ENCODE measurements at regions of chr2 and their contacts with region 1.

Region 1: GRCh38 chr2:239401067-239401880 is 454 bp upstream of the HDAC4 start:
- DNase-seq: peak; percentile 100
- ATAC-seq: peak; percentile 86
- H3K4me3 ChIP-seq: peak overlapping the region; percentile 12 to 91 (median 91)
- H3K4me3 Mint-ChIP-seq: peak overlapping the region; percentile 94
- H3K27ac ChIP-seq: peak overlapping the region; percentile 99 to 100
- H3K27ac Mint-ChIP-seq: peak overlapping the region; percentile 99
- H3K4me1 ChIP-seq: peaks cover 11 to 20% of the 10 kb centered on the region in 2 donors
- H3K4me1 Mint-ChIP-seq: peaks cover 33% of the 10 kb centered on the region
- H3K27me3 ChIP-seq: peaks cover 0 to 3% (median 0%) of the 10 kb centered on the region in 4 experiments
- H3K27me3 Mint-ChIP-seq: no peaks in the 10 kb centered on the region
- CTCF ChIP-seq: no peak

Region 2: GRCh38 chr2:239035361-239036078 is 365.8 kb before region 1 on chr2:
- CTCF ChIA-PET with region 1: no interaction called
- POLR2A ChIA-PET with region 1: no interaction called
- intact Hi-C with region 1: loop called (anchors 5 kb)
- DNase-seq: peak; percentile 62
- ATAC-seq: peak; percentile 89
- H3K4me3 ChIP-seq: no peak overlapping the region
- H3K4me3 Mint-ChIP-seq: no peak overlapping the region
- H3K27ac ChIP-seq: no peak overlapping the region
- H3K27ac Mint-ChIP-seq: no peak overlapping the region
- H3K4me1 ChIP-seq: no peaks in the 10 kb centered on the region
- H3K4me1 Mint-ChIP-seq: no peaks in the 10 kb centered on the region
- H3K27me3 ChIP-seq: peaks cover 0 to 2% (median 0%) of the 10 kb centered on the region in 4 experiments
- H3K27me3 Mint-ChIP-seq: peaks cover 16% of the 10 kb centered on the region
- CTCF ChIP-seq: peak; percentile 80

Region 3: GRCh38 chr2:239252801-239253200 is 148.5 kb before region 1 on chr2:
- CTCF ChIA-PET with region 1: interaction called, 3 read pairs
- POLR2A ChIA-PET with region 1: no interaction called
- intact Hi-C with region 1: loop called (anchors 5 kb)
- DNase-seq: no peak
- ATAC-seq: peak; percentile 19
- H3K4me3 ChIP-seq: peak overlapping the region in 4 of 5 experiments; percentile 15 to 36 (median 34)
- H3K4me3 Mint-ChIP-seq: peak overlapping the region; percentile 84
- H3K27ac ChIP-seq: no peak overlapping the region
- H3K27ac Mint-ChIP-seq: no peak overlapping the region
- H3K4me1 ChIP-seq: peaks cover 32 to 41% of the 10 kb centered on the region in 2 donors
- H3K4me1 Mint-ChIP-seq: peaks cover 49% of the 10 kb centered on the region
- H3K27me3 ChIP-seq: peaks cover 0 to 56% (median 16%) of the 10 kb centered on the region in 4 experiments
- H3K27me3 Mint-ChIP-seq: peaks cover 25% of the 10 kb centered on the region
- CTCF ChIP-seq: no peak

Region 4: GRCh38 chr2:239267288-239267951 is 133.9 kb before region 1 on chr2:
- CTCF ChIA-PET with region 1: interaction called, 9 read pairs
- POLR2A ChIA-PET with region 1: interaction called, 9 read pairs
- intact Hi-C with region 1: loop called (anchors 1 kb)
- DNase-seq: peak; percentile 91
- ATAC-seq: peak; percentile 95
- H3K4me3 ChIP-seq: peak overlapping the region; percentile 4 to 79 (median 26)
- H3K4me3 Mint-ChIP-seq: peak overlapping the region; percentile 87
- H3K27ac ChIP-seq: no peak overlapping the region
- H3K27ac Mint-ChIP-seq: peak overlapping the region; percentile 79
- H3K4me1 ChIP-seq: peaks cover 55 to 62% of the 10 kb centered on the region in 2 donors
- H3K4me1 Mint-ChIP-seq: peaks cover 56% of the 10 kb centered on the region
- H3K27me3 ChIP-seq: peaks cover 0 to 92% (median 36%) of the 10 kb centered on the region in 4 experiments
- H3K27me3 Mint-ChIP-seq: peaks cover 60% of the 10 kb centered on the region
- CTCF ChIP-seq: peak; percentile 73

Region 5: GRCh38 chr2:239369631-239370161 is 31.6 kb before region 1 on chr2:
- CTCF ChIA-PET with region 1: interaction called, 6 read pairs
- POLR2A ChIA-PET with region 1: interaction called, 11 read pairs
- intact Hi-C with region 1: loop called (anchors 1 kb)
- DNase-seq: peak; percentile 95
- ATAC-seq: peak; percentile 90
- H3K4me3 ChIP-seq: peak overlapping the region in 4 of 5 experiments; percentile 30 to 57 (median 40)
- H3K4me3 Mint-ChIP-seq: peak overlapping the region; percentile 80
- H3K27ac ChIP-seq: peak overlapping the region; percentile 90 to 91
- H3K27ac Mint-ChIP-seq: peak overlapping the region; percentile 88
- H3K4me1 ChIP-seq: peaks cover 20 to 32% of the 10 kb centered on the region in 2 donors
- H3K4me1 Mint-ChIP-seq: peaks cover 15% of the 10 kb centered on the region
- H3K27me3 ChIP-seq: no peaks in the 10 kb centered on the region
- H3K27me3 Mint-ChIP-seq: no peaks in the 10 kb centered on the region
- CTCF ChIP-seq: no peak

Region 6: DNA sequence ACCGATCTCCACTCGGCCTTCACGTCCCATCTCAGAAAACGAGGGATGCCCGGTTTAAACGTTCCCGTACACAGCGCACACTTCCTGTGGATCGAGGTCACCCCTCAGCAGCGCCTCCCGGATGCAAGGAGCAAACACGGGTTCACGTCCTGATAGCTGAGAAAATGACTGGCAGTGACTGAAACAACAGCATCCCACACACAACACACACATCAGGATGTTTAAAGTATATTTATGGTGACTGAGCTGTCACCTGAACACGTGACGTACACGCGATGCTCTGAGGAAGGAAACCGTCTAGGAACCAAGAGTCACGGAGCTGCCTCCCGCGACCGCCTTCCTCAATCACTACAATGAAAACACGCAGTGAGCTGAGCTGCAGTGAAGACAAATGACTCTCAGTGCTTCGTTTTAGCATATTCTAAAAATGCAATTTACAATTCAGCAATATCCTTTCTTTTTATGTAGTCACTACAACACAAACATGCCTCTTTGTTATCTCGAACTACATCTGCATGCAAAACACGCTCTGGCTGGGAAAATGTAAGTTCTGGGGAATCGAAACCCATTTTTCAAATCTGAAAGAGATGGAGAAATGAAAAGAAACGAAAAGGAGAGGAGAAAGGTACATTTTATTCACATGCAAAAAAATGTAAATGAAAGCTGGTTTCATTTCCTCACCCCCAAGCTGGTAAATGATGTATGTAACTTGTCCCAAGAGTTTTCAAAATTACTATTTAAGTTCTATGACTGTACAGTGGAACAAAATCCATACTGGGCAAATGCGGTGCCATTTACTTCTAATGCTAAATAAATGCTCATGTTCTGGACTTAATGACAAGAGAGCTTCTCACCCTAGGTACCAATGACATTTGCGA is 20.2 kb before region 1 on chr2:
- CTCF ChIA-PET with region 1: interaction called, 15 read pairs
- POLR2A ChIA-PET with region 1: interaction called, 18 read pairs
- intact Hi-C with region 1: loop called (anchors 1 kb)
- DNase-seq: peak; percentile 90
- ATAC-seq: peak; percentile 57
- H3K4me3 ChIP-seq: peak overlapping the region; percentile 46 to 58 (median 46)
- H3K4me3 Mint-ChIP-seq: peak overlapping the region; percentile 86
- H3K27ac ChIP-seq: peak overlapping the region; percentile 91 to 94
- H3K27ac Mint-ChIP-seq: peak overlapping the region; percentile 90
- H3K4me1 ChIP-seq: peaks cover 19 to 50% of the 10 kb centered on the region in 2 donors
- H3K4me1 Mint-ChIP-seq: peaks cover 45% of the 10 kb centered on the region
- H3K27me3 ChIP-seq: no peaks in the 10 kb centered on the region
- H3K27me3 Mint-ChIP-seq: no peaks in the 10 kb centered on the region
- CTCF ChIP-seq: no peak

Region 7: GRCh38 chr2:239533569-239534316 is 132.5 kb after region 1 on chr2:
- CTCF ChIA-PET with region 1: no interaction called
- POLR2A ChIA-PET with region 1: no interaction called
- intact Hi-C with region 1: no loop called
- DNase-seq: no peak
- ATAC-seq: no peak
- H3K4me3 ChIP-seq: no peak overlapping the region
- H3K4me3 Mint-ChIP-seq: no peak overlapping the region
- H3K27ac ChIP-seq: no peak overlapping the region
- H3K27ac Mint-ChIP-seq: no peak overlapping the region
- H3K4me1 ChIP-seq: no peaks in the 10 kb centered on the region
- H3K4me1 Mint-ChIP-seq: no peaks in the 10 kb centered on the region
- H3K27me3 ChIP-seq: no peaks in the 10 kb centered on the region
- H3K27me3 Mint-ChIP-seq: peaks cover 12% of the 10 kb centered on the region
- CTCF ChIP-seq: no peak

Region 8: GRCh38 chr2:239660390-239661230 is 259.3 kb after region 1 on chr2:
- CTCF ChIA-PET with region 1: no interaction called
- POLR2A ChIA-PET with region 1: no interaction called
- intact Hi-C with region 1: no loop called
- DNase-seq: no peak
- ATAC-seq: no peak
- H3K4me3 ChIP-seq: no peak overlapping the region
- H3K4me3 Mint-ChIP-seq: no peak overlapping the region
- H3K27ac ChIP-seq: no peak overlapping the region
- H3K27ac Mint-ChIP-seq: no peak overlapping the region
- H3K4me1 ChIP-seq: no peaks in the 10 kb centered on the region
- H3K4me1 Mint-ChIP-seq: no peaks in the 10 kb centered on the region
- H3K27me3 ChIP-seq: peaks cover 0 to 13% (median 1%) of the 10 kb centered on the region in 4 experiments
- H3K27me3 Mint-ChIP-seq: peaks cover 41% of the 10 kb centered on the region
- CTCF ChIP-seq: no peak

Region 9: DNA sequence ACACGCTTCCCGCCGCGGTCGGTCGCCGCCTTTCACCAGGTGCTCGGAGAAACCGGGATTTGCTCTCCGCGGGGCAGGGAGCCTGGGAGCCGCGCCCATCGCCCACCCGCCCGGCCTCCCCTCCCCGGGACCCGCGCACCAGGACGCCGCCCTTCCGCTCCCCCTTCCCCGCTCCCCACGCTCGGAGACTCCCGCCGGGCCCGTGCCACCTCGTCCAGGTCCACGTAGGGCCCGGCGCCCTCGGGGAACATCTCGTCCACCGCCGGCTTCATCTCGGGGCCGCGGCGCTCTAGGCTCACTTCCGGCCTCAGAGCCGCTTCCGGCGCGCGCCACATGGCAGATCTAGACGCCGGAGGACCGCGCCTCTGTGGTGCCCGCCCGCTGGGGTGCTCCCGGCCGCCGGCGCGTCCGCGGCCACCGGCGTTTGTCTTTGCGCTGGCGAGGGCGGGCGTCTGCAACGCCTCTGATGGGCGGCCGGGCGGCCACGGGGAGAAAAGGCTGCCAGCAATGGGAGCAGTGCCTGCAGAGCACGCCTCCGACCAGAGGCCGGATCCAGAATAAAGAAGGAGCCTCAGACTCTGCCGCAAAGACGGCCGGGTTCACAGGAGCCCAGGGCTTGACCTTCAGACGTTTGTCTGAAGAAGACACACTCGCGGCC is 734.9 kb after region 1 on chr2 and contains the start of gene COPS9:
- CTCF ChIA-PET with region 1: no interaction called
- POLR2A ChIA-PET with region 1: no interaction called
- intact Hi-C with region 1: loop called (anchors 5 kb)
- DNase-seq: peak; percentile 89
- ATAC-seq: peak; percentile 88
- H3K4me3 ChIP-seq: peak within 1 kb of the TSS; percentile 63 to 87 (median 67)
- H3K4me3 Mint-ChIP-seq: peak within 1 kb of the TSS; percentile 93
- H3K27ac ChIP-seq: peak within 1 kb of the TSS in 1 of 2 donors; percentile 68
- H3K27ac Mint-ChIP-seq: peak within 1 kb of the TSS; percentile 84
- H3K4me1 ChIP-seq: peaks cover 12 to 22% of the 10 kb centered on the region in 2 donors
- H3K4me1 Mint-ChIP-seq: peaks cover 29% of the 10 kb centered on the region
- H3K27me3 ChIP-seq: no peaks in the 10 kb centered on the region
- H3K27me3 Mint-ChIP-seq: peaks cover 3% of the 10 kb centered on the region
- CTCF ChIP-seq: no peak
- total RNA-seq, gene COPS9: 40.4 and 48.7 TPM in 2 replicates